ENCODE measurements at regions of chr3 and their contacts with region 1.

Region 1: GRCh38 chr3:33047842-33048834 is 48.8 kb downstream of the GLB1 start:
- DNase-seq: peak; percentile 81 to 90 (median 86)
- H3K4me3 ChIP-seq: peak overlapping the region in 1 of 2 donors; percentile 47
- H3K4me3 Mint-ChIP-seq: peak overlapping the region; percentile 70 to 95 (median 86)
- H3K27ac ChIP-seq: peak overlapping the region; percentile 36
- H3K27ac Mint-ChIP-seq: peak overlapping the region; percentile 90 to 99 (median 98)
- H3K4me1 ChIP-seq: peaks cover 89% of the 10 kb centered on the region
- H3K4me1 Mint-ChIP-seq: peaks cover 62 to 86% (median 78%) of the 10 kb centered on the region in 4 donors
- H3K27me3 ChIP-seq: no peaks in the 10 kb centered on the region
- H3K27me3 Mint-ChIP-seq: no peaks in the 10 kb centered on the region

Region 2: DNA sequence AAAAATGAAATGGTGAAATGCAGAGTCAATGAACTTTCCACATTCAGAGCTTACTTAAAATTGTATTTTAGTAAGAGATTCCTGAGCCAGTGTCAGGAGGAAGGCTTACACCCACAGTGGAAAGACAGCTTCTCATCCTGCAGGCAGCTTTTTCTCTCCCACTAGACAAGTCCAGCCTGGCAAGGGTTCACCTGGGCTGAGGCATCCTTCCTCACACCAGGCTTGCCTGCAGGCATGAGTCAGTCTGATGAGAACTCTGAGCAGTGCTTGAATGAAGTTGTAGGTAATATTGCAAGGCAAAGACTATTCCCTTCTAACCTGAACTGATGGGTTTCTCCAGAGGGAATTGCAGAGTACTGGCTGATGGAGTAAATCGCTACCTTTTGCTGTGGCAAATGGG is 93.6 kb before region 1 on chr3:
- CTCF ChIA-PET with region 1: interaction called, 53 read pairs
- POLR2A ChIA-PET with region 1: interaction called, 12 read pairs
- intact Hi-C with region 1: no loop called
- DNase-seq: no peak
- H3K4me3 ChIP-seq: peak overlapping the region; percentile 37 to 66
- H3K4me3 Mint-ChIP-seq: peak overlapping the region; percentile 91 to 98 (median 95)
- H3K27ac ChIP-seq: peak overlapping the region; percentile 79
- H3K27ac Mint-ChIP-seq: peak overlapping the region; percentile 82 to 99 (median 97)
- H3K4me1 ChIP-seq: peaks cover 74% of the 10 kb centered on the region
- H3K4me1 Mint-ChIP-seq: peaks cover 39 to 82% (median 62%) of the 10 kb centered on the region in 4 donors
- H3K27me3 ChIP-seq: no peaks in the 10 kb centered on the region
- H3K27me3 Mint-ChIP-seq: no peaks in the 10 kb centered on the region

Region 3: DNA sequence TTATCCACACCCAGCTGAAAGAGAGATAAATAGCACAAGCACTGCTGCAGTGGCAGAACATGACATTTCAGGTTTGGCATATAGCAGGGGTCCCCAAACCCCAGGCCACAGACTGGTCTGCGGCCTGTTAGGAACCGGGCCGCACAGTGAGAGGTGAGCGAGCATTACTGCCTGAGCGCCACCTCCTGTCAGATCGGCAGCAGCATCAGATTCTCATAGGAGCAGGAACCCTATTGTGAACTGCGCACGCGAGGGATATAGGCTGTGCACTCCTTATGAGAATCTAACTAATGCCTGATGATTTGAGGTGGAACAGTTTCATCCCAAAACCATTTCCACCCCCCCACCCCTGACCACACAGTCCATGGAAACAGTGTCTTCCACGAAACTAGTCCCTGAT is 42.1 kb before region 1 on chr3:
- CTCF ChIA-PET with region 1: interaction called, 4 read pairs
- POLR2A ChIA-PET with region 1: interaction called, 13 read pairs
- intact Hi-C with region 1: loop called (anchors 5 kb)
- DNase-seq: peak; percentile 27 to 61 (median 51)
- H3K4me3 ChIP-seq: no peak overlapping the region
- H3K4me3 Mint-ChIP-seq: peak overlapping the region in 7 of 8 donors; percentile 20 to 62 (median 40)
- H3K27ac ChIP-seq: peak overlapping the region; percentile 0
- H3K27ac Mint-ChIP-seq: peak overlapping the region; percentile 73 to 94 (median 86)
- H3K4me1 ChIP-seq: peaks cover 78% of the 10 kb centered on the region
- H3K4me1 Mint-ChIP-seq: peaks cover 41 to 81% (median 66%) of the 10 kb centered on the region in 4 donors
- H3K27me3 ChIP-seq: no peaks in the 10 kb centered on the region
- H3K27me3 Mint-ChIP-seq: no peaks in the 10 kb centered on the region

Region 4: GRCh38 chr3:33030802-33031201 is 17.3 kb before region 1 on chr3:
- CTCF ChIA-PET with region 1: interaction called, 159 read pairs
- POLR2A ChIA-PET with region 1: interaction called, 687 read pairs
- intact Hi-C with region 1: loop called (anchors 2 kb)
- DNase-seq: peak; percentile 58 to 77 (median 72)
- H3K4me3 ChIP-seq: no peak overlapping the region
- H3K4me3 Mint-ChIP-seq: peak overlapping the region in 7 of 8 donors; percentile 32 to 73 (median 54)
- H3K27ac ChIP-seq: no peak overlapping the region
- H3K27ac Mint-ChIP-seq: peak overlapping the region; percentile 52 to 94 (median 83)
- H3K4me1 ChIP-seq: peaks cover 29% of the 10 kb centered on the region
- H3K4me1 Mint-ChIP-seq: peaks cover 24 to 49% (median 31%) of the 10 kb centered on the region in 4 donors
- H3K27me3 ChIP-seq: no peaks in the 10 kb centered on the region
- H3K27me3 Mint-ChIP-seq: no peaks in the 10 kb centered on the region

Region 5: GRCh38 chr3:33113772-33114621 is 65.9 kb after region 1 on chr3 and contains the start of gene CRTAP:
- CTCF ChIA-PET with region 1: interaction called, 3 read pairs
- POLR2A ChIA-PET with region 1: interaction called, 5 read pairs
- intact Hi-C with region 1: loop called (anchors 1 kb)
- DNase-seq: peak; percentile 85 to 88 (median 87)
- H3K4me3 ChIP-seq: peak within 1 kb of the TSS; percentile 71 to 83
- H3K4me3 Mint-ChIP-seq: peak within 1 kb of the TSS; percentile 83 to 92 (median 89)
- H3K27ac ChIP-seq: peak within 1 kb of the TSS; percentile 55
- H3K27ac Mint-ChIP-seq: peak within 1 kb of the TSS; percentile 75 to 94 (median 91)
- H3K4me1 ChIP-seq: peaks cover 42% of the 10 kb centered on the region
- H3K4me1 Mint-ChIP-seq: peaks cover 32 to 65% (median 48%) of the 10 kb centered on the region in 4 donors
- H3K27me3 ChIP-seq: no peaks in the 10 kb centered on the region
- H3K27me3 Mint-ChIP-seq: no peaks in the 10 kb centered on the region
- total RNA-seq, gene CRTAP: 75.4 to 84.4 TPM

Region 6: GRCh38 chr3:34183611-34184313 is 1135.6 kb after region 1 on chr3:
- CTCF ChIA-PET with region 1: no interaction called
- POLR2A ChIA-PET with region 1: no interaction called
- intact Hi-C with region 1: no loop called
- DNase-seq: no peak
- H3K4me3 ChIP-seq: no peak overlapping the region
- H3K4me3 Mint-ChIP-seq: peak overlapping the region in 1 of 8 donors; percentile 24
- H3K27ac ChIP-seq: no peak overlapping the region
- H3K27ac Mint-ChIP-seq: no peak overlapping the region
- H3K4me1 ChIP-seq: no peaks in the 10 kb centered on the region
- H3K4me1 Mint-ChIP-seq: no peaks in the 10 kb centered on the region
- H3K27me3 ChIP-seq: no peaks in the 10 kb centered on the region
- H3K27me3 Mint-ChIP-seq: no peaks in the 10 kb centered on the region